Tibial artery (tissue), 4 donors: ENCODE measurements at regions of chr11 and their contacts with region 1.

Region 1: GRCh38 chr11:6655020-6655789 is 404 bp downstream of the DCHS1 start:
- DNase-seq: peak in 1 of 2 donors; percentile 53
- H3K4me3 ChIP-seq: peak overlapping the region; percentile 56 to 62
- H3K27ac ChIP-seq: peak overlapping the region; percentile 76 to 80
- H3K4me1 ChIP-seq: peaks cover 0 to 34% (median 9%) of the 10 kb centered on the region in 4 donors
- H3K27me3 ChIP-seq: no peaks in the 10 kb centered on the region
- CTCF ChIP-seq: no peak

Region 2: GRCh38 chr11:6612213-6613041 is 42.8 kb before region 1 on chr11 and contains the start of gene TAF10:
- intact Hi-C with region 1: loop called (anchors 5 kb)
- DNase-seq: peak; percentile 99
- H3K4me3 ChIP-seq: peak within 1 kb of the TSS; percentile 82 to 89
- H3K27ac ChIP-seq: peak within 1 kb of the TSS; percentile 95 to 98
- H3K4me1 ChIP-seq: peaks cover 0 to 60% (median 45%) of the 10 kb centered on the region in 4 donors
- H3K27me3 ChIP-seq: no peaks in the 10 kb centered on the region
- CTCF ChIP-seq: peak; percentile 27 to 42